Caco-2 (cell line): ENCODE measurements at regions of chr6 and their contacts with region 1.

Region 1: DNA sequence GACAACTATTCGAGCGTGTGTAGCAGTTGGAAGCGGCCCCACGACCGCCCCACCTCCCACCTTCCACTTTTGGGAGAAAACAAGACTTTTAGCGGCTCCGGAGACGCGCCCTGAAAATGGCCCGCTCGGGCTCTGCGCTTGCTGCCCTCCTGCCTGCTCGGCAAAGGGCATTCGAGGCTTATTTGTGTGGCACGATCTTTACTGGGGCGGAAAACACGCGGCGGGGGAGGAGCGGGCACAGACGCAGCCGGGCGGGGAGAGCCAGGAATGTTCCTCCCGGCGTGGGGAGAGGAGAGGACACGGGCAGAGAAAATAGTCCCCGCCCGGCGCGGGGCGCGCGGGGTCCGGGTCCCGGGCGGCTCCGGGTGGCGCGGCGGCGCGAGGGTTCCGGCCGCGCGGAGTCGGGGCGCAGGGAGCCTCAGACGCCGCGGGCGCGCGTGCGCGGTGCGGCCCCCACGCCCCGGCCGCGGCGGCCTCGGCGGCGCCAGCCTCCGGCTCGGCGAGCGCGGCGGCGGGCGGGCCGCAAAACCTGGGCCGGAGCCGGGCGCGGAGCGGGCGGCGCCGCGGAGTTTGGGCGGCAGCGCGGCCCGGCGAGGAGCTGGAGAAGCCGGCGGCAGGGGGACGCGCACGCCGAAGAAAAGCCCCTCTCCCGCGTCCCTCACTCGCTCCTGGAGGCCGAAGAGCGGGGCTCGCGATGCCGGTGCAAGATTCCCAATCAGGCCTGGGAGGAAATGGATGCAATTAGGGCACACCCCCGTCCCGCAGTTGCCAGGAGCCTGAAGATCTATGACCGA is 90.0 kb upstream of the ARID1B start:
- DNase-seq: peak; percentile 67 to 84
- H3K4me3 ChIP-seq: peak overlapping the region; percentile 79
- H3K4me3 Mint-ChIP-seq: peak overlapping the region; percentile 75
- H3K27ac Mint-ChIP-seq: peak overlapping the region; percentile 33
- H3K4me1 ChIP-seq: no peaks in the 10 kb centered on the region; the same call in 1 of the 2 replicates
- H3K4me1 Mint-ChIP-seq: peaks cover 17% of the 10 kb centered on the region
- H3K27me3 ChIP-seq: no peaks in the 10 kb centered on the region; the same call in 1 of the 2 replicates
- H3K27me3 Mint-ChIP-seq: no peaks in the 10 kb centered on the region
- CTCF ChIP-seq: no peak

Region 2: GRCh38 chr6:156564127-156564806 is 122.9 kb before region 1 on chr6:
- CTCF ChIA-PET with region 1: no interaction called
- POLR2A ChIA-PET with region 1: no interaction called
- intact Hi-C with region 1: loop called (anchors 1 kb)
- DNase-seq: peak; percentile 45 to 73
- H3K4me3 ChIP-seq: no peak overlapping the region
- H3K4me3 Mint-ChIP-seq: no peak overlapping the region
- H3K27ac Mint-ChIP-seq: no peak overlapping the region
- H3K4me1 ChIP-seq: 0 out of 2 replicates have a peak, but pooled peaks cover 3% of the 10 kb centered on the region
- H3K4me1 Mint-ChIP-seq: no peaks in the 10 kb centered on the region
- H3K27me3 ChIP-seq: no peaks in the 10 kb centered on the region
- H3K27me3 Mint-ChIP-seq: peaks cover 9% of the 10 kb centered on the region
- CTCF ChIP-seq: peak; percentile 88

Region 3: DNA sequence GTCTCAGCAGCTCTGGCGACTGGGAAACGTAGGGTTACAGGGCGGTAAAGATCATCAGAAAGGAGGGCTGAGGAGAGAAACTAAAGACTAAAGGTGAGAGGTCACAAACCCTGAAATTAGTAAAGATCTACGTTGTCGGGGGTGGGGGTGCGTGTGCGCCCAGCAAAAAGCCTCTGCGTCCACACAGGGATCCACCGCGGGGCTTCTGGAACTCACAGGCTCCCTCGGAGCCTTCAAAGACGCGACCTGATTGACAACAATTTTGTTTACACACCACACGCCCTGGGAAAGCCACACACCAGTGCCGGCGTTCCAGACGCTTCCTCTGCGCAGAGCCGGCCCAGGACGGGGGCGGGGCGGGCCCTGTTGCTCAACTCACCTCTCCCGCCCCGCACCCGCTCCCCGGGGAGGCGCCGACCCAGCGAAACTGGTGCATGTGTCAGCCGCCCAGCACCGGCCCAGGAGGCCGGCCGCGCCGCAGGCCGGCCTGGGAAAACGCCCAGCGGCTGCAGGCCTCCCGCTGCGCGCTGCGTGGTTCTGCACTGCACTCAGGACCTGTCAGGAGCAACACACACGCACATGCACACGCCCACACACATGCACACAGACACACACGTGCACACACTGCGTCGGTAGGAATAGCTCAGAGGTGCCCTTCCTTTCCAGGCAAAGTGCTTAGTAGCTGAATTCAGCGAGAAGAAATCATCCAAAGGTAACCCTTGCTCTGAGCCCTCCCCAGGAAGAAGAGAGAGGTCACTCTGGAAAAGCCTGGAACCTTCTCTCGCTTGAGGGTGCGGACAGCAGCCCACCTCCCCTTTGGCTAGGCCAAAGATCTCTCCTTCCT is 32.8 kb after region 1 on chr6:
- CTCF ChIA-PET with region 1: interaction called, 4 read pairs
- POLR2A ChIA-PET with region 1: no interaction called
- intact Hi-C with region 1: loop called (anchors 1 kb)
- DNase-seq: peak; percentile 96
- H3K4me3 ChIP-seq: peak overlapping the region; percentile 49
- H3K4me3 Mint-ChIP-seq: peak overlapping the region; percentile 94
- H3K27ac Mint-ChIP-seq: peak overlapping the region; percentile 98
- H3K4me1 ChIP-seq: peaks cover 18% of the 10 kb centered on the region
- H3K4me1 Mint-ChIP-seq: peaks cover 19% of the 10 kb centered on the region
- H3K27me3 ChIP-seq: no peaks in the 10 kb centered on the region
- H3K27me3 Mint-ChIP-seq: no peaks in the 10 kb centered on the region
- CTCF ChIP-seq: no peak